Right lobe of liver (tissue), 6 donors: ENCODE measurements at regions of chr13 and their contacts with region 1.

Region 1: DNA sequence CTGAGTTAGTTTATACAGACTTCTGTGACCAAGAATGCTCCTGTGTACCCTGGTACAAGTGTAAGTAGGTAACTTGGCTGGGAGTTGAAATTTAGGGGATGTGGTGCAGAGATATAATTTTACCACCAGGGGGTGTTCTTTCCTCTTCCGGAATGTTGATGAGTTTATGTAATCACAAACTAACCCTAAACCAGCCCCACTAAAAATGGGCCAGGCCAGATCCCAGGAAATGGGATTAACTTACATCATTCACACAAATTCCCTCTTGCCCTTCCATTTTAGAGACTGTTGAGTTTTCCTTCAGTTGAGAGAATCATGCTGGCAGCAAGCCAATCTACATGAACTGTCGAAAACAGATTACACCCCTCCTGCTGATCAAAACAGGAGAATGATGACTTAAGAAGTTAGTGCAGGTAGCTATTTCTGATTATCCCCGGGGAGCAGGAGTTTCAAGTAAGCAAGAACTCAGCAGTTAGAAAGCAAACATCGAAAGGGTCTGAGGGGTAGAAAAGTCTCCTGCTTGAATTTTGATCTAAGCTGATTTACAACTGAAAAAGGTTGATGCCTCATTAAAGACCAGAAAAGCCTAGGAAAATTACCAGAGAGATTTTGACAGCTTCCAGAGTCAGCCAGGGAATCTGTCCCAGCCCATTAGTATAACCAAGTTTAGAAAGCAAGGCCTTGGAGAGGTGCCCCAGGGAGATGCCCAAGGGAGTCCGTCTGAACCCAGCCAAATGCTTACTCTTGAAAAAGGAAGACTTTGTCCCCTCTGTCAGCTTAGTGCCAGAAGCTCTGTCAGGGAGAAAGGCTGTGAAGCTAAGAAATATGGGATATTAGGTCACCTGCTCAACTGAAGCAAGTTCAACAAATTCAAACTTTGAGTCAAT is 32.3 kb upstream of the MED4 start:
- DNase-seq: peak in 2 of 3 donors; percentile 55 to 63
- ATAC-seq: peak; percentile 86 to 94 (median 90)
- H3K4me3 ChIP-seq: no peak overlapping the region
- H3K27ac ChIP-seq: peak overlapping the region in 2 of 3 donors; percentile 58 to 66
- H3K4me1 ChIP-seq: peaks cover 0 to 22% (median 8%) of the 10 kb centered on the region in 4 donors
- H3K27me3 ChIP-seq: no peaks in the 10 kb centered on the region
- CTCF ChIP-seq: peak; percentile 78 to 88 (median 84)
- POLR2A ChIP-seq: no peak

Region 2: DNA sequence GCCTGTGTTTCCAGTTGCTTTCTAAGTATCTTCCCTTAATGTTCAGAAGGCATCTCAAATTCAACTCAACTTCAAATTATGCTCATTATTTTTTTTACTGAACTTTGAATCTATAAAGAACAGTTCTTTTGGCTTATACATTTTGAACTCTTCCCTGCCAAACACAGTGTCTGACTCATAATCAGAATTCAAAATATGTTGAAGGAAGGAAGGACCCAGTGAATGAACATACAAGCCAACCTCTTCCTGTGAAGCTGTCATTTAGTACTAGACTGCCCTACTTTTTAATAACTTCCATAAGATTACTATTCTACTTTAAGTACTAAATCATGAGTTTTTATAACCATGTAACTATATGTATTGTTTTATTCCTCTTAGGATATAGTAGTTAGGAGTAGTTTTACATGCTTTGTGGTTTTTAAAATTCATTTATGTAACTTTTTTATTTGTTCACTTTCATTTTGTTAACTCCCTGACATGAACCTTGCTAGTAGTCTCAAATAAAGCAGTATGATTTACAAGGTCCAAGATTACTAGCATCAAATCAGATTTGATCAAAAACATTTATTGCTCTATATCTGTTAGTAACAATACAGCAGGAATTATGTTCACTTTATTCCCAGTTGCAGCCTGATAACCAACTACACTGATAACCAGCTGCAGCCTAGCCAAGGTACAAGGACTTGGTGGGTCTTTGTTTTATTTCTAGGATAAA is 83.2 kb before region 1 on chr13:
- intact Hi-C with region 1: no loop called
- DNase-seq: no peak
- ATAC-seq: no peak
- H3K4me3 ChIP-seq: no peak overlapping the region
- H3K27ac ChIP-seq: no peak overlapping the region
- H3K4me1 ChIP-seq: no peaks in the 10 kb centered on the region
- H3K27me3 ChIP-seq: no peaks in the 10 kb centered on the region
- CTCF ChIP-seq: no peak
- POLR2A ChIP-seq: no peak

Region 3: DNA sequence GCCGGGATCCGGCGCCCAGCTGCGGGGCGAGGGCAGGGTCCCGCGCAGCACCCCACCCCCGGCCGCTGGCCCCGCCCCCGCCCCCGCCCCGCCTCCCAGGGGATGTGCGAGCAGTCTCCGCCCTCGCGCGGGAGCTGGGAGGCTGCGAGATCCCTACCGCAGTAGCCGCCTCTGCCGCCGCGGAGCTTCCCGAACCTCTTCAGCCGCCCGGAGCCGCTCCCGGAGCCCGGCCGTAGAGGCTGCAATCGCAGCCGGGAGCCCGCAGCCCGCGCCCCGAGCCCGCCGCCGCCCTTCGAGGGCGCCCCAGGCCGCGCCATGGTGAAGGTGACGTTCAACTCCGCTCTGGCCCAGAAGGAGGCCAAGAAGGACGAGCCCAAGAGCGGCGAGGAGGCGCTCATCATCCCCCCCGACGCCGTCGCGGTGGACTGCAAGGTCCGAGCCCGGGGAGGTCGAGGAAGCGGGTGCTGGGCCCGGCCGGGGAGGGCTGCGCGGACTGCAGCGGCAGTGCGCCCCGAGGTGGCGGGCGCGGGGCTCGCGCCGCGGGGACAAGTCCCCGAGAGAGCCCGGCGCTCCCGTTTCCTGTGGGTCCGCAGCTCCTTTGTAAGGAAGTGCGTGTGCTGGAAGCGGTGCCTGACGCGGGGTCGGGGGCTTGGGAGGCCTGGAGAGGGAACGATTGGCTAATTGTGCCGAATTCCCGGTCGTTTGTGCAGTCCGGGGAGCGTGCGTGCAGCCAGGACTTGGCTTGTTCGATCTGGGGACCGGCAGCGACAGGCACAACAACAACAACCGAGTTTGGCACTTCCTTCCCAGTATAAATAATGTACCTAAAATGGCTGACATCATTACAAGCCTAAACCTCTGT is 106.1 kb after region 1 on chr13 and contains the start of gene ITM2B:
- intact Hi-C with region 1: loop called in 1 of 2 experiments (anchors 10 kb)
- DNase-seq: peak; percentile 90 to 92 (median 91)
- ATAC-seq: peak; percentile 81 to 93 (median 88)
- H3K4me3 ChIP-seq: peak within 1 kb of the TSS; percentile 93 to 97 (median 97)
- H3K27ac ChIP-seq: peak within 1 kb of the TSS; percentile 99 to 100 (median 100)
- H3K4me1 ChIP-seq: peaks cover 0 to 40% (median 12%) of the 10 kb centered on the region in 4 donors
- H3K27me3 ChIP-seq: no peaks in the 10 kb centered on the region
- CTCF ChIP-seq: peak; percentile 19 to 60 (median 44)
- POLR2A ChIP-seq: peak; percentile 97
- total RNA-seq, gene ITM2B: 203 to 381 (median 320) TPM